Dendritic cell treated with granulocyte-macrophage colony-stimulating factor and Interleukin-4, amounts not matched to agents 40 ng/mL and 50 ng/mL, for 4 days (primary cell): ENCODE measurements at regions of chr9 and their contacts with region 1.

Region 1: DNA sequence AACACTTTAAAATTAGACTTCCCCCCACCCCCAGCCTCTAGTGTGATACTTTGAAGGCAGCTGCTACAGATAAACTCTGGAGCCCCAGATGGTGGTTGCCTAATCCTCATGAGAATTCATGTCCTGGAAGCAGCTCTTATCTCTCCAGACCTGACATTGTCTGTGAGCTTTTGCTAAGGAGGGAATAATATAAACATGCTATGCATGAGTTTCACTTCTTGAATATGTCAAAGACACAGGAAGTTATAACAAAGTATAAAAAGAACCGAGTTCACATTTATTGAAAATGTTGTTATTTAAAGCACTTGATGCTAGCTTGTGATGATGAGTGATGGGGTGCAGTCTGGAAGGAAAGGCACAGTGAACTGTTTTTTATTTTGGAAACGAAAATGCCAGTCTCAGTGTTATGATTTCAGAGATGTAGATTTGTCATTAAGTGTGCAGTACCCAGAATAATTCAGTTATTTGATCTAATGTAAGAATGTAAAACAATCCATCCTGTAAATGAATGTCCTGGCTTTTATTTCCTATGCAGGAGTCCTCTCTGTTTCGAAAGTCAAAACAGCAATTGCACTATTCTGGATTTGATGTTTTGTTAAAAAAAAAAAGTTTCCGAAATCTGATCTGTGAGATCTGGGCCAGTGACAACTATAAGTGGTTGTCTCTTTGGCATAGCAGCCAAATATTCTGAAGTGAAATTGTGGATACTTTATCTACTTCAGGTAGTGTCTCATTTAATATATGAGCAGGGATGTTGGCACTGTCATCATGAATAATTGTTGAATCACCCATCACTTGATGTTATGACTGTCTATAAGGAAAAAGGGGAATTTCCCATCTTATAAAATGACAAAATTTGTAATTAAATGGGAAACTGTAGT is 77.0 kb downstream of the ZCCHC7 start:
- H3K4me3 Mint-ChIP-seq: no peak overlapping the region
- H3K27ac Mint-ChIP-seq: peak overlapping the region; percentile 49
- H3K4me1 Mint-ChIP-seq: peaks cover 52% of the 10 kb centered on the region
- H3K27me3 Mint-ChIP-seq: no peaks in the 10 kb centered on the region

Region 2: DNA sequence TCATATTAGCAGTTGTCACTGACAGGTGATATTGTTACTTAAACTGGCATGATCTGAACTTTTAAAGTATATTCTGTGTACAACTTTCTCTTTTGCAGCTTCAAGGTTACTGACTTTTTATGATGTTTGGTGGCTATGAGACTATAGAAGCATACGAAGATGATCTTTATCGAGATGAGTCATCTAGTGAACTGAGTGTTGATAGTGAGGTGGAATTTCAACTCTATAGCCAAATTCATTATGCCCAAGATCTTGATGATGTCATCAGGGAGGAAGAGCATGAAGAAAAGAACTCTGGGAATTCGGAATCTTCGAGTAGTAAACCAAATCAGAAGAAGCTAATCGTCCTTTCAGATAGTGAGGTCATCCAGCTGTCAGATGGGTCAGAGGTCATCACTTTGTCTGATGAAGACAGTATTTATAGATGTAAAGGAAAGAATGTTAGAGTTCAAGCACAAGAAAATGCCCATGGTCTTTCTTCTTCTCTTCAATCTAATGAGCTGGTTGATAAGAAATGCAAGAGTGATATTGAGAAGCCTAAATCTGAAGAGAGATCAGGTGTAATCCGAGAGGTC is 71.1 kb before region 1 on chr9:
- intact Hi-C with region 1: loop called (anchors 5 kb)
- H3K4me3 Mint-ChIP-seq: no peak overlapping the region
- H3K27ac Mint-ChIP-seq: no peak overlapping the region
- H3K4me1 Mint-ChIP-seq: peaks cover 17% of the 10 kb centered on the region
- H3K27me3 Mint-ChIP-seq: no peaks in the 10 kb centered on the region

Region 3: GRCh38 chr9:37149666-37150308 is 47.6 kb before region 1 on chr9:
- intact Hi-C with region 1: loop called (anchors 5 kb)
- H3K4me3 Mint-ChIP-seq: peak overlapping the region; percentile 51
- H3K27ac Mint-ChIP-seq: peak overlapping the region; percentile 95
- H3K4me1 Mint-ChIP-seq: peaks cover 35% of the 10 kb centered on the region
- H3K27me3 Mint-ChIP-seq: no peaks in the 10 kb centered on the region